ENCODE measurements at regions of chr4 and their contacts with region 1.

Region 1: GRCh38 chr4:20248155-20248558 is 3.5 kb upstream of the SLIT2 start:
- DNase-seq: peak in 11 of 42 donors; percentile 7 to 65 (median 30)

Region 2: DNA sequence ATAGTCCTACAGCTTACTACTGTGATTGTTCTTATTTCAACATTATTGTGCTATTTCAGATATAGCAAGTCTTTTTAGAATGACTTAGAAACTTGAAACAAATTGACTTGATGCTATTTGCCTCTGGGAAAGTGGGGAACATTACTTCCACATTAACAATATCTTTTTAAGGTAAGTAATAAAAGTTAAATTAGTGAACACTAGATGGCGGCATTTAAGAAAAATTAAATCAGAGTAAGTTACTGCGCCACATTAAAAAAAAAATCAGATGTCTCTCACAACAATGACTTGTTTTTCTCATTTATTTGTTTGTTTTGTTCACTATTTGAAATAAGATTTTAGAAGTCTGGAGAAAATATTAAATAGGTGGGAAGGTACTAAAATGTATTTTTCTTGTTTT is 1023.3 kb before region 1 on chr4:
- intact Hi-C with region 1: loop called (anchors 10 kb)
- DNase-seq: no peak